Activated CD4-positive, alpha-beta T cell treated with anti-CD3 and anti-CD28 coated beads, Interleukin-2, amount 10 ng/mL, durations not matched to agents 24 days and 14 days (primary cell): ENCODE measurements at regions of chr11 and their contacts with region 1.

Region 1: DNA sequence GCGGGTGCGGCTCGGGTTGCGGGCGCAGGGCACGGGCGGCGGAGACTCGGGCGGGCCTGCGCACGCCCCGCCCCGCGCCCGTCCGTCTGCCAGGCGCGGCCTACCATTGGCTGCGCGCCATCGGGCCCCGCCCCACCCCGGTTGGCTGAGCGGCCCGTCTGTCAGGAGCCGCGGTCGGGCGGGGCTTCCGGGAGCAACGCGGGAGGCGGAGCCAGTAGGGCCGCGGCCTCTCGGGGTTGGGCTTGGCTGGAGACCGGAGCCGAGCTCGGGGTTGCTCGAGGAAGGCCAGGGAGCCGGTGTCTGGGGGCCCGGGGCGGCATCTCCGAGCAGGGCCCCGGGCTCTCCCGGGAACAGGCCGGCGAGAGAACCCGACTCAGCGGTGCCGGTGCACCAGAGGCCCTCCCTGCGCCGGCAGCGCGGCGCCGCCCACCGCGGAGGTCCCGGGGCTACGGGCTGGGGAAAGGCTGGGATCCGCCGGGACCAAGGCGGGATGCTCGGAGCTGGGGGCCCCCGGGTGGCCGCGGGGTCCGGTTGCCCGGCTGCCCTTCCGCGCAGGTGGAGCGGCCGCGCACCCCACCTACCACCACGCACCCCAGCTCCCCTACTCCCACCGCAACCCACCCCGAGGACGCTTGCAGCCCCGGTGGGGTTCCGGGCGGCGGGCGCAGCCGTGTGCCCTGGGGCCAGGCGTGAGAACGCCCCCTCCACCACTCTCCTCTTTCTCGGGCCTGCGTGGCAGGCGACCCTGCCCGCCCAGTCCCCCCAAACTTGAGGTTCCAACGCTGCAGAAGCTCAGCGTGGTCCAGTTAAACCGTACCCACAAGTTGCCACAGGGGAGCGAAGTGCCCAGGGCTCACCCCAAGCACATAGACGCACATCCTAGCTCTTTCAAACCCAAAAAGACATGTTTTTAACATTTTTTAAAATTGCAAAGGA is at the start of gene HRAS:
- DNase-seq: peak; percentile 99
- H3K4me3 Mint-ChIP-seq: peak within 1 kb of the TSS; percentile 89
- H3K27ac Mint-ChIP-seq: peak within 1 kb of the TSS; percentile 83
- H3K4me1 Mint-ChIP-seq: peaks cover 15% of the 10 kb centered on the region
- H3K27me3 Mint-ChIP-seq: no peaks in the 10 kb centered on the region
- total RNA-seq, gene HRAS: 70.8 and 94.4 TPM in 2 replicates

Region 2: GRCh38 chr11:518463-519250 is 17.1 kb before region 1 on chr11:
- intact Hi-C with region 1: loop called (anchors 1 kb)
- DNase-seq: peak; percentile 96
- H3K4me3 Mint-ChIP-seq: peak overlapping the region; percentile 75
- H3K27ac Mint-ChIP-seq: peak overlapping the region; percentile 69
- H3K4me1 Mint-ChIP-seq: peaks cover 4% of the 10 kb centered on the region
- H3K27me3 Mint-ChIP-seq: no peaks in the 10 kb centered on the region

Region 3: GRCh38 chr11:554824-555472 is 19.2 kb after region 1 on chr11:
- intact Hi-C with region 1: loop called (anchors 2 kb)
- DNase-seq: peak; percentile 93
- H3K4me3 Mint-ChIP-seq: peak overlapping the region; percentile 51
- H3K27ac Mint-ChIP-seq: no peak overlapping the region
- H3K4me1 Mint-ChIP-seq: peaks cover 3% of the 10 kb centered on the region
- H3K27me3 Mint-ChIP-seq: peaks cover 15% of the 10 kb centered on the region

Region 4: DNA sequence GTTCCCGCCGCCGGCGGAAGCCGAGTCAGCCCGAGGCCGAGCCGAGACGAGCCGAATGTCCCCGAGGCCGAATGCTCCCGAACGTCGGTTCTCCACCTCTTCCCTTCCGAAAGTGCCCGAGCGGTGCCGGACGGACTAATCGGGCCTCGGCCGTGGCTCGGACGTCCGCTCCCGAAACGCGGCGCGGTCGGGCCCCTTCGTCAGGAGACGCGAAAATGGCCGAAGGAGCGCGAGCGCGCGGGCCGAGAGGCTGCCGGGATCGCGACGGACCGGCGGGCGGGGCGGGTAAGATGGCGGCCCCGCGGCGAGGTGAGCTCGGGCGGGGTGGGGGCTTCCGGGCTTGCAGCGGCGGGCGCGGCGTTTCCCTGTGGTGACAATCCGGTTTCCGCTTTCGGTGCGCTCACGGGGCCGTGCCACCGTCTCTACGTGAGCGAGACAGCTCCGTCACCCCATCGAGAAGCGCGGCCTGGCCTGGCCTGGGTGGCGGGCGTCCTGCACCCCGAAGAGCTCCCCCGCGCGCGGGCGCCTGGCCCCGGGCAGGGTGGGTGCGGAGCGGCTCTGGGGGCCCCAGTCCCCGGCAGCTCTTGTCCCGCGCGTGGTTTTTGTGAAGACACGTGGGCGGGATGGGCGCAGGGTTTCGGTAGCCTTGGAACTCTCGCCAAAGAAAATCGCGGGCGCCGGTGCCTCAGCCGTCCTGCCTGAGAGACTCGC is 159.9 kb after region 1 on chr11 and contains the start of gene TMEM80:
- intact Hi-C with region 1: loop called (anchors 5 kb)
- DNase-seq: peak; percentile 99
- H3K4me3 Mint-ChIP-seq: peak within 1 kb of the TSS; percentile 90
- H3K27ac Mint-ChIP-seq: peak within 1 kb of the TSS; percentile 94
- H3K4me1 Mint-ChIP-seq: peaks cover 42% of the 10 kb centered on the region
- H3K27me3 Mint-ChIP-seq: no peaks in the 10 kb centered on the region
- total RNA-seq, gene TMEM80: 12.3 and 12.5 TPM in 2 replicates